ENCODE measurements at regions of chr14 and their contacts with region 1.

Region 1: DNA sequence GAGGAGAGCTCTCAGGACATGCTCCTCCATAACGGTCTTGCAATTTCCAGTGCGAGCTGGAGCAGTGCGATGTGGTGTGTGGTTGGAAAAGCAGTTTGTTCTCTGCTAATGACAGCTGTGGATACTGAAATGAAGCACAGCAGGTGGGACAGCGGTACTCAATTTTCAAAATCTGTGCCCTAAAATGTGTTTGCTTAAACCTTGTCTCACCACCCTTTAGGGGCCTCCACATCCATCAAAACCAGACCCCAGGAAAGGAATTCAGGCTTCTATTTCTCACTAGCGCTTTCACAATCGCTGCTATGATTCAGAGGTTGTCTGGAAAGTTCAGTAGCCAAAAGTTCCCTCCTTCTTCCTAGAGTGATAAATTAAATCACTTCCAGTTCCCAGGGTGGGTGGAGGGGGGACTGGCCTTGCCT is 440.8 kb downstream of the EGLN3 start:
- DNase-seq: no peak
- ATAC-seq: no peak
- H3K4me3 ChIP-seq: no peak overlapping the region
- H3K27ac ChIP-seq: no peak overlapping the region
- H3K4me1 ChIP-seq: no peaks in the 10 kb centered on the region
- H3K27me3 ChIP-seq: peaks cover 0 to 2% of the 10 kb centered on the region in 2 experiments; a peak in 2 of 4 replicates
- CTCF ChIP-seq: no peak
- EP300 ChIP-seq: no peak
- POLR2A ChIP-seq: no peak
- RAD21 ChIP-seq: no peak

Region 2: GRCh38 chr14:33490555-33490954 is 19.5 kb before region 1 on chr14:
- CTCF ChIA-PET with region 1: interaction called, 3 read pairs
- POLR2A ChIA-PET with region 1: interaction called, 4 read pairs
- RAD21 ChIA-PET with region 1: interaction called, 17 read pairs
- SMC1A ChIA-PET with region 1: interaction called, 120 read pairs
- in situ Hi-C with region 1: no loop called
- intact Hi-C with region 1: no loop called
- DNase-seq: no peak
- ATAC-seq: no peak
- H3K4me3 ChIP-seq: no peak overlapping the region
- H3K27ac ChIP-seq: no peak overlapping the region
- H3K4me1 ChIP-seq: no peaks in the 10 kb centered on the region
- H3K27me3 ChIP-seq: no peaks in the 10 kb centered on the region; a peak in 1 of 4 replicates
- CTCF ChIP-seq: no peak
- EP300 ChIP-seq: no peak
- POLR2A ChIP-seq: no peak
- RAD21 ChIP-seq: no peak

Region 3: DNA sequence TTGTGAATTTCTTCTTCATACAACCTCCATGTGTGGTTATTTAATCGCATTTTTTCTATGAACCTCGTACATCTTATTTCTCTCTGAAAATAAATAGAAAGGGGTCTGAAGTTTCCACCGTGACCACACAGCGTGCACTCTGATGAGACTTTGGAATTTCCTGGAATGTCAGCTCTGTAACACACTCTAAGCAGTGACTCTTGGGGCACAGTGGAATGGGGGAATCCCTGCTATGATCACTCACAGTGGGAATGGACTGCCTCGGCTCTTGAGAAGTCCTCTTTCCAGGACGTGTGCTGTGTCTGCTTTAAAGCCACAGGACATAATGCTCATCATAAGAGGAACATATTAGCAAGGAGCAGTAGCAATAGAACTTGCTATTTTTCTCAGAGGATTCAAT is 24.6 kb after region 1 on chr14:
- CTCF ChIA-PET with region 1: interaction called, 22 read pairs
- POLR2A ChIA-PET with region 1: interaction called, 101 read pairs
- RAD21 ChIA-PET with region 1: interaction called, 209 read pairs
- SMC1A ChIA-PET with region 1: interaction called, 298 read pairs
- in situ Hi-C with region 1: no loop called
- intact Hi-C with region 1: no loop called
- DNase-seq: no peak
- ATAC-seq: no peak
- H3K4me3 ChIP-seq: no peak overlapping the region
- H3K27ac ChIP-seq: no peak overlapping the region
- H3K4me1 ChIP-seq: no peaks in the 10 kb centered on the region
- H3K27me3 ChIP-seq: no peaks in the 10 kb centered on the region
- CTCF ChIP-seq: no peak
- EP300 ChIP-seq: no peak
- POLR2A ChIP-seq: no peak
- RAD21 ChIP-seq: no peak

Region 4: GRCh38 chr14:33556382-33557121 is 46.5 kb after region 1 on chr14:
- CTCF ChIA-PET with region 1: interaction called, 18 read pairs
- POLR2A ChIA-PET with region 1: interaction called, 69 read pairs
- RAD21 ChIA-PET with region 1: interaction called, 12 read pairs
- SMC1A ChIA-PET with region 1: interaction called, 145 read pairs
- in situ Hi-C with region 1: no loop called
- intact Hi-C with region 1: no loop called
- DNase-seq: no peak
- ATAC-seq: no peak
- H3K4me3 ChIP-seq: no peak overlapping the region
- H3K27ac ChIP-seq: no peak overlapping the region
- H3K4me1 ChIP-seq: no peaks in the 10 kb centered on the region
- H3K27me3 ChIP-seq: peaks cover 0 to 3% of the 10 kb centered on the region in 2 experiments; a peak in 1 of 4 replicates
- CTCF ChIP-seq: no peak
- EP300 ChIP-seq: no peak
- POLR2A ChIP-seq: no peak
- RAD21 ChIP-seq: no peak

Region 5: GRCh38 chr14:33569821-33570687 is 60.0 kb after region 1 on chr14:
- CTCF ChIA-PET with region 1: interaction called, 18 read pairs
- POLR2A ChIA-PET with region 1: interaction called, 69 read pairs
- RAD21 ChIA-PET with region 1: interaction called, 110 read pairs
- SMC1A ChIA-PET with region 1: interaction called, 145 read pairs
- in situ Hi-C with region 1: no loop called
- intact Hi-C with region 1: no loop called
- DNase-seq: no peak
- ATAC-seq: no peak
- H3K4me3 ChIP-seq: no peak overlapping the region
- H3K27ac ChIP-seq: no peak overlapping the region
- H3K4me1 ChIP-seq: no peaks in the 10 kb centered on the region
- H3K27me3 ChIP-seq: no peaks in the 10 kb centered on the region
- CTCF ChIP-seq: no peak
- EP300 ChIP-seq: no peak
- POLR2A ChIP-seq: no peak
- RAD21 ChIP-seq: no peak

Region 6: DNA sequence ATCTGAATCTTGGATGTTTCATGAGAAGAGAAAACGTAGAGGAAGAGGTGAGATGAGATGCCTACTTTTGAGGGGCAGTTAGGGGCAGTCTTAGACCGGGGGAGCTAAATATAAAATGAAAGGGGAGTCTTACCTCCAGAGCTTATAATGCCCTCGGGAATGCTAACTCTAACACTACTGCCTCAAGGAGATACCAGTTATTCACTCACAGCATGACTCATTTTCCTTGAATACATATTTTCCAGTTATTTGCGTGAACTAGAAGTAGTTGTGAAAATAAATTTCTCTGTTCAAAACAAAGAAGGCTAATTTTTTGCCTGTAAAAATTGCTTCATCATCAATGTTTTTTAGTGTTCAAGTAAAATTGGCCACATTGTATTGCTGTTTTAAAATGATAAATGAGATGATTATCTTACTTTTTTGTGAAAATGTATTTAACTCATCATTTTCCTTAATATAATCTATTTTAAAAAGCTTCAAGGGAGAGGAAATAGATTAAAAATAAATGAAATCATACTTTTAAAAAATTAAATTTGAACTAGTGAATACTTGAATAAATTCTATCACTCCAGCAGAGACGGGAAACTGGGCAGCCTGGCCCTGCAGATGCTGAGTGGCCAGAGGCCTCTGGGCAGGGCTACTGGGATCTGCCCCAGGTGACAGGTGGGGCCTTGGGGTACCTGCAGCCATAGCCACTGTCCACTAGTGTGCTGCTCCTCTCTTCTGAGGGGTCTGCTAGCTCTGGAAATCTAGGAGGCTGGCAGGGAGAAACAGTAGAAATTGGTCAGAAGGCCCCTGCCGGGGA is 101.5 kb after region 1 on chr14:
- CTCF ChIA-PET with region 1: interaction called, 6 read pairs
- POLR2A ChIA-PET with region 1: interaction called, 3 read pairs
- RAD21 ChIA-PET with region 1: interaction called, 11 read pairs
- SMC1A ChIA-PET with region 1: interaction called, 6 read pairs
- in situ Hi-C with region 1: no loop called
- intact Hi-C with region 1: no loop called
- DNase-seq: no peak
- ATAC-seq: peak; percentile 29; the same call in 1 of the 3 replicates
- H3K4me3 ChIP-seq: no peak overlapping the region
- H3K27ac ChIP-seq: no peak overlapping the region
- H3K4me1 ChIP-seq: no peaks in the 10 kb centered on the region
- H3K27me3 ChIP-seq: no peaks in the 10 kb centered on the region
- CTCF ChIP-seq: no peak
- EP300 ChIP-seq: no peak
- POLR2A ChIP-seq: no peak
- RAD21 ChIP-seq: no peak